WTC11 (cell line): ENCODE measurements at regions of chr5 and their contacts with region 1.

Region 1: GRCh38 chr5:137743031-137743640 is 7.2 kb upstream of the KLHL3 start:
- DNase-seq: peak; percentile 43
- ATAC-seq: peak; percentile 87
- H3K4me3 Mint-ChIP-seq: no peak overlapping the region
- H3K27ac Mint-ChIP-seq: no peak overlapping the region
- H3K4me1 Mint-ChIP-seq: peaks cover 8% of the 10 kb centered on the region; the same call in 1 of the 2 replicates
- H3K27me3 Mint-ChIP-seq: no peaks in the 10 kb centered on the region; the same call in 1 of the 2 replicates
- CTCF ChIP-seq: peak; percentile 37; the same call in 1 of the 2 replicates

Region 2: DNA sequence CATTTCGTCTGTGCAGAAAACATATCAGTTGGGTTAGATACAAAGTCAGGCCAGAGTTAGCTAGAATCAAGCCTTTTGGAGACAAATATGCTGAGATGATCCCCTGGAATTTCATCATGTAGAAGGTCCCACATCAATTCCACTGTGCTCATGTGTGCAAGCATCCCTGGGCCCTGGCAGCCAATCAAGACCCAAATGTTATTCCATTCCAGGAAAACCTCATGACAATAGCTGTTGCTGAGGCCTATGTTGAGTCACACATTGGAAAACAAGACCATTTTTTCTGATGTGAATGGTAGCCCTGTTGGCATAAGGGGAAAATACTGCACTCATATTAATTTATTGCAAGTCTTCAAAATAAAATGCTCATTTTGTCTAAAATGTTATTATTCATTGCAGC is 255.5 kb before region 1 on chr5:
- CTCF ChIA-PET with region 1: no interaction called
- POLR2A ChIA-PET with region 1: no interaction called
- DNase-seq: no peak
- ATAC-seq: no peak
- H3K4me3 Mint-ChIP-seq: no peak overlapping the region
- H3K27ac Mint-ChIP-seq: no peak overlapping the region
- H3K4me1 Mint-ChIP-seq: no peaks in the 10 kb centered on the region
- H3K27me3 Mint-ChIP-seq: no peaks in the 10 kb centered on the region
- CTCF ChIP-seq: no peak

Region 3: DNA sequence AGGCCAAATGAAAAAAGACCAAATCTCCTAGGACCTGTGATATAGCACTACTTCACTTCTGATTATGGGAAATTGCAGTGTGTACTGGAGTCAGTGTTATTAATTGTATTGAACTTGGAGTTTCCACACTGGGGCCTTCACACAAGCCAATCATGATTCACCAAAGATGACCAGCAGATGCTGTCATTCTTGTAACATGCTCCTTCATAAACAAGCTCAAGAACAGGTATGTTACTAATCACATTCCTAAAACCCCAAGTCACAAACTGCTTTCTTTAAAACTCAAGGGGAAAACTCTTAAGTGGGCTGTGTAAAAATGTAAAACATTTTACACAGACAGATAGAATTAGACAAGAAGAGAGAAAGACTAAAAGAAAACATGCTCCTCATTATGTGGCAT is 12.8 kb before region 1 on chr5:
- CTCF ChIA-PET with region 1: interaction called, 18 read pairs
- POLR2A ChIA-PET with region 1: interaction called, 3 read pairs
- DNase-seq: no peak
- ATAC-seq: no peak
- H3K4me3 Mint-ChIP-seq: no peak overlapping the region
- H3K27ac Mint-ChIP-seq: no peak overlapping the region
- H3K4me1 Mint-ChIP-seq: no peaks in the 10 kb centered on the region; the same call in 1 of the 2 replicates
- H3K27me3 Mint-ChIP-seq: no peaks in the 10 kb centered on the region
- CTCF ChIP-seq: no peak

Region 4: DNA sequence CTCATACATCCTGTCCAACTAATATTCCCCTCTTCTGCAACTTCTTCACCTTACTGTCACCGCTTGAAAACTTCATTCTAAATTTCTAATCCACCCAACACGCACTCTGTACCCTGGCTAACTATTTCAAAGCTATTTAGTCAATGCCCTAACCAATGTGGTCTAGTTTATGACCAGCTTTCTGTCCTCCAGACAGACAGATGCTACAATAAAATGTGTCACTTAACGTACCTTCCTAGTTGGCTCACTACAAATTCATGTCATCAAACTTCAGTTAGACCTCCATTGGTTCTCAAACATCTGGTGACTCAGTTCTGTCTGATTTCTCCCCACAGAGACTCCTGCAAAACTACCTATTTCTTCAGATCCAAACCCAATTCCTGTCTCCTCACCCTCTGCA is 232.1 kb after region 1 on chr5:
- CTCF ChIA-PET with region 1: no interaction called
- POLR2A ChIA-PET with region 1: no interaction called
- DNase-seq: no peak
- ATAC-seq: no peak
- H3K4me3 Mint-ChIP-seq: no peak overlapping the region
- H3K27ac Mint-ChIP-seq: no peak overlapping the region
- H3K4me1 Mint-ChIP-seq: no peaks in the 10 kb centered on the region
- H3K27me3 Mint-ChIP-seq: no peaks in the 10 kb centered on the region
- CTCF ChIP-seq: no peak